Thyroid gland (tissue), 4 donors: ENCODE measurements at regions of chr1 and their contacts with region 1.

Region 1: GRCh38 chr1:6239950-6240768 is 3.8 kb upstream of the HES3 start:
- DNase-seq: no peak
- H3K4me3 ChIP-seq: no peak overlapping the region
- H3K27ac ChIP-seq: no peak overlapping the region
- H3K4me1 ChIP-seq: peaks cover 1 to 12% of the 10 kb centered on the region in 2 donors
- H3K27me3 ChIP-seq: peaks cover 36% of the 10 kb centered on the region
- CTCF ChIP-seq: no peak
- POLR2A ChIP-seq: no peak

Region 2: DNA sequence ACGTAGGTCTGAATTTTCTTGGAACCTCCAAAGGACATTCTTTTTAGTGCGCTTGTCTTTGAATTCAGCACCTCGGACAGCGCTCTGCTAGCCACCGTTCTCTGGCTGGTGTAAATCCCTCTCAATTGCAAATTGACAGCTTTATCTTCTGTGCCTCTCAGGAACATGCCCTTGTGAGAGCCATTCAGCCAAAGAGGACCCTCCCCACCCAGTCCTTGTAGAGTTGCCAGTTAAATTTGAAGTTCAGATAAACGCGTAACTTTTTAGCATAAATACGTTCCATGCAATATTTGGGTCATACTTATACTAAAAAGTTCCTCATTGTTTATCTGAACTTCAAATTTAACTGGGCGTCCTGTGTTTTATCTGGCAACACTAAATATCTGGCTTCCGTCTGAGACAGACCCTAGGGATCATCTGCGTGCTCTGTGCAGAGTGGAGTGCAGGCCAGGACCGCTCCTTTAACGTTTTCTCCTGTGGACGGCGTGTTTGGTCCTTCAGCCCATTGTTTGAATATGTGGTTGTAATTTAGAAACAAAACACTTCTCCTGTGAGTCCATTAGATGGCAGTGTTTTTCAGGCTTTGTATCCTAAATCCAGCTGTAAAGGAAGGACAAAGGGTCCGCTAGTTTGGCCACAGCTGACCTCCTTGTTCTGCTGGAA is 187.5 kb before region 1 on chr1:
- intact Hi-C with region 1: loop called (anchors 5 kb)
- DNase-seq: peak; percentile 67 to 79
- H3K4me3 ChIP-seq: no peak overlapping the region
- H3K27ac ChIP-seq: no peak overlapping the region
- H3K4me1 ChIP-seq: peaks cover 0 to 3% of the 10 kb centered on the region in 2 donors
- H3K27me3 ChIP-seq: no peaks in the 10 kb centered on the region
- CTCF ChIP-seq: peak in 3 of 6 experiments; percentile 23 to 50 (median 44)
- POLR2A ChIP-seq: no peak

Region 3: GRCh38 chr1:6098303-6099215 is 141.6 kb before region 1 on chr1:
- intact Hi-C with region 1: no loop called
- DNase-seq: no peak
- H3K4me3 ChIP-seq: no peak overlapping the region
- H3K27ac ChIP-seq: no peak overlapping the region
- H3K4me1 ChIP-seq: no peaks in the 10 kb centered on the region
- H3K27me3 ChIP-seq: no peaks in the 10 kb centered on the region
- CTCF ChIP-seq: no peak
- POLR2A ChIP-seq: no peak

Region 4: GRCh38 chr1:6127587-6128163 is 112.5 kb before region 1 on chr1:
- intact Hi-C with region 1: no loop called
- DNase-seq: peak; percentile 39 to 51
- H3K4me3 ChIP-seq: no peak overlapping the region
- H3K27ac ChIP-seq: no peak overlapping the region
- H3K4me1 ChIP-seq: no peaks in the 10 kb centered on the region
- H3K27me3 ChIP-seq: no peaks in the 10 kb centered on the region
- CTCF ChIP-seq: no peak
- POLR2A ChIP-seq: no peak

Region 5: DNA sequence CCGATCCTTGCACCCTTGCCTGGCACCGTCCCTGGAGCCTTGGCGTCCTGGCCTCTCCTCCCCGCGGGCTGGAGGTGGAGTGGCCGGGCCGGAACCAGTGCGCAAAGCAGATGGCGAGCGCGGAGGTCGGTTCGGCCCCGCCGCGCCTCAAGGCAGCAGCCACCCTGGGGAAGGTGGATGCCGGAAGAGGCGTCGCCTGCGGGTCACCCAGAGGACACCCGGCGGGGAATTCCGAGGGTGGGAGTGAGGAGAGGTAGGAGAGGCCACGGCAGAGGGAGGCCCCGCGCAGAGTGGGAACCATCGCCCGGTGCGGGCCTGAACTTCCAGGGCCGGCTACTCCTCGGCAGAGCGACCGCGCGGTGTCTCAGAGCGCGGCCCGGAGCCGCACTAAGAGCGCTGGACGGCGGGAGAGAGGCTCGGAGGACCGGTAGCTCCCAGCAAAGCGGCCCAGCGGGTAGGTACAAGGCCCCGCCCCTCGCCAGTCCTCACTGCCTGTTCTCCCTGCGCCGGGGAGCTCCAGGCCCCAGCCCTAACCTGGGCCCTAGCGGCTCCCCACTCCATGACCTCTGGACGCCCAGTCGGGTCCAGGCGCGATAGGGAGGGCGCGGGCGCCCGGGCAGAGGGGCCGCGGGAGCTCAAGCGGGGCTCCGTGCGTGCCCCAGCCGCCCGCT is 34.2 kb before region 1 on chr1 and contains the start of gene RNF207:
- intact Hi-C with region 1: loop called (anchors 5 kb)
- DNase-seq: peak; percentile 71 to 72
- H3K4me3 ChIP-seq: peak within 1 kb of the TSS; percentile 18 to 47 (median 22)
- H3K27ac ChIP-seq: peak within 1 kb of the TSS in 2 of 3 donors; percentile 56 to 63
- H3K4me1 ChIP-seq: peaks cover 24 to 32% of the 10 kb centered on the region in 2 donors
- H3K27me3 ChIP-seq: no peaks in the 10 kb centered on the region
- CTCF ChIP-seq: no peak
- POLR2A ChIP-seq: peak in 1 of 2 donors; percentile 58
- total RNA-seq, gene RNF207: 32.9 to 63.5 (median 47.0) TPM

Region 6: DNA sequence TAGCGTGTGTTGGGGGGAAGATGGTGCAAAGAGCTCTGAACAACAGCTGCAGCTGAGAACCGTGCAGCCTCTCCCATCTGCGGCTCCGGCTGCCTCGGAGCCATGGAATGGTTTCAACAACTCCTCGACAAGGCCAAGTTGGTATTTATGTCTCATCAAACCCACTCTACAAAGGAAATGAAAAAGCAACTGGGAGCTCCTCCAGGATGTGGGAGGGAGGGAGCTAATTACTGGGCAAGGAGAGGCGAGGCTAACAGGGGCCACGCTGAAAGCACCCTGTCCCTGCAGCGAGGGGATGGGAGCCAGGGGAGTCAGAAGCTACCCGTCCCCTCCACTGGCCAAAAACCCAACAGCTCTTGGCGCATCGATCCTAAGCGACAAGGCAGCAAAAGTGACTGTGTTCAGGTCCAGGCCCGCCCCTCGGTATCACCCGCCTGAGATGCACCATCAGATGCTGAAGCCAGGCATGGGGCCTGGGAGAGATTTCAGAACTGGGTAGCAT is 90.3 kb after region 1 on chr1:
- intact Hi-C with region 1: no loop called
- DNase-seq: no peak
- H3K4me3 ChIP-seq: no peak overlapping the region
- H3K27ac ChIP-seq: no peak overlapping the region
- H3K4me1 ChIP-seq: no peaks in the 10 kb centered on the region
- H3K27me3 ChIP-seq: no peaks in the 10 kb centered on the region
- CTCF ChIP-seq: no peak
- POLR2A ChIP-seq: no peak